Activated T-helper 2 cell treated with anti-CD3 and anti-CD28 coated beads, Interferon-gamma antibody, Interleukin-2, Interleukin-4, amounts not matched to agents 10 μg/mL and 5 μg/mL and 100 μg/mL, durations not matched to agents 14 hours and 24 hours and 36 hours (primary cell): ENCODE measurements at regions of chr7 and their contacts with region 1.

Region 1: GRCh38 chr7:96321658-96322372 is at the start of gene SLC25A13:
- DNase-seq: peak; percentile 63
- H3K4me3 Mint-ChIP-seq: peak within 1 kb of the TSS; percentile 92
- H3K27ac Mint-ChIP-seq: peak within 1 kb of the TSS; percentile 98
- H3K4me1 Mint-ChIP-seq: peaks cover 35% of the 10 kb centered on the region
- H3K27me3 Mint-ChIP-seq: no peaks in the 10 kb centered on the region
- total RNA-seq, gene SLC25A13: 28.8 and 35.4 TPM in 2 replicates

Region 2: GRCh38 chr7:95916573-95917297 is 405.1 kb before region 1 on chr7:
- intact Hi-C with region 1: loop called (anchors 10 kb)
- DNase-seq: peak; percentile 49
- H3K4me3 Mint-ChIP-seq: no peak overlapping the region
- H3K27ac Mint-ChIP-seq: no peak overlapping the region
- H3K4me1 Mint-ChIP-seq: peaks cover 10% of the 10 kb centered on the region
- H3K27me3 Mint-ChIP-seq: peaks cover 12% of the 10 kb centered on the region

Region 3: DNA sequence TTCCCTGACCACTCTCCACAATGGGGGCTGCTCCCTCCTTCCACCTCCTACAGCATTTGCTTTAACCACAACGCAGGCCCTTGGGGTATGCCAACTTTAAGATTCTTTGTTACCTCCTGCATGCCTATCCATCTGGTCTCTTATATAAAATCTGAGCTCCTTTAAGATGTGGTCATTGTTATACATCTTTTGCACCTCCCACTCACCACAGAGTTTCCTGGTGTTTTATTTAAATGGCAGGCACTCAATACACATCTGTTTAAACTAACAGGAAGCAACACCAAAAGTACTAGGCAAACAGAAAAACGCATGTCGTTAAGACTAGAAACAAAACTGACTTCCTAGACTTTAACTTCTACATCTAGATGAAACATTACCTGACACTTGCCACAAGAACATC is 36.2 kb before region 1 on chr7:
- intact Hi-C with region 1: loop called (anchors 1 kb)
- DNase-seq: peak; percentile 41
- H3K4me3 Mint-ChIP-seq: peak overlapping the region; percentile 62
- H3K27ac Mint-ChIP-seq: peak overlapping the region; percentile 90
- H3K4me1 Mint-ChIP-seq: peaks cover 51% of the 10 kb centered on the region
- H3K27me3 Mint-ChIP-seq: no peaks in the 10 kb centered on the region

Region 4: GRCh38 chr7:96495751-96496216 is 174.0 kb after region 1 on chr7:
- intact Hi-C with region 1: loop called (anchors 1 kb)
- DNase-seq: peak; percentile 20
- H3K4me3 Mint-ChIP-seq: peak overlapping the region; percentile 62
- H3K27ac Mint-ChIP-seq: peak overlapping the region; percentile 92
- H3K4me1 Mint-ChIP-seq: peaks cover 27% of the 10 kb centered on the region
- H3K27me3 Mint-ChIP-seq: peaks cover 9% of the 10 kb centered on the region